T-cell (primary cell): ENCODE measurements at regions of chr3 and their contacts with region 1.

Region 1: GRCh38 chr3:143158014-143158988 is 38.7 kb downstream of the CHST2 start:
- DNase-seq: no peak
- ATAC-seq: no peak
- H3K4me3 ChIP-seq: no peak overlapping the region
- H3K4me3 Mint-ChIP-seq: no peak overlapping the region
- H3K27ac ChIP-seq: no peak overlapping the region
- H3K27ac Mint-ChIP-seq: no peak overlapping the region
- H3K4me1 ChIP-seq: peaks cover 0 to 4% of the 10 kb centered on the region in 2 experiments
- H3K4me1 Mint-ChIP-seq: peaks cover 13 to 31% (median 15%) of the 10 kb centered on the region in 3 donors
- H3K27me3 ChIP-seq: no peaks in the 10 kb centered on the region
- H3K27me3 Mint-ChIP-seq: no peaks in the 10 kb centered on the region

Region 2: DNA sequence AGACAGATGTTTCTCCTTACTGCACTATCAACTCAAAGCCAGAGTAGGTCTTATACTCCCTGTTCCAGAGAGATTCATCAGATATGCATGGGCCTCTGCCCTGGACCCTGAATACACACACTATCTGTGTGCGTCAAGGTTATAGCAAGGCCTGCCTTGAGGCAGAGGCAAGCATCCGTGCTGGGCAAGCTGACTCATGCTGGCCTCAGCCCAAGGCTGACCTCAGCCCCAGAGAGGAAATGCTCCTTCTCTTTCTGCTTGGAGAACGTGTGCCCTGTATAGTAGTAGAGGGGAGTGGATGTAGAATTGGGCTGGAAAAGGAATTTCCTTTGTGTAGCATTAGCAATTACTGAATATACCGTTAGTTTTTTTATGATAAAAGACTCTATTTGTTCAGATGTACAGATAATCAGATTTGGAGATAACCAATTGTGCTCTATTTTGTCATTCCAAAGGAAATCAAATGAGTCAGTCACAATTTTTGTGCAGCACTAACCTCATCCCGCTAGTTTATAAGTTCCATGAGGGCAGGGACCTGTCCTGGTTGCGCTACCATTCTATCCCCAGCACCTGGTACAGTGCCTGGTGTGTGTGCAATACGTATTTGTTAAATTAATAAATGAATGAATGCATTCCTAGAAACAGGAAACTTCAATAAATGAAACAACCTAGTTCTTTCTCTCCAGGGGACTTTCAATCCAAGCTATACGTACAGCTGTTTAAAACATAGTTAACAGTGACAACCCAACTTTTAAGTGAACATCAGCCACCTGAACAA is 181.5 kb before region 1 on chr3:
- CTCF ChIA-PET with region 1: no interaction called
- POLR2A ChIA-PET with region 1: no interaction called
- DNase-seq: no peak
- ATAC-seq: no peak
- H3K4me3 ChIP-seq: no peak overlapping the region
- H3K4me3 Mint-ChIP-seq: no peak overlapping the region
- H3K27ac ChIP-seq: no peak overlapping the region
- H3K27ac Mint-ChIP-seq: no peak overlapping the region
- H3K4me1 ChIP-seq: no peaks in the 10 kb centered on the region
- H3K4me1 Mint-ChIP-seq: no peaks in the 10 kb centered on the region
- H3K27me3 ChIP-seq: peaks cover 0 to 16% of the 10 kb centered on the region in 2 experiments
- H3K27me3 Mint-ChIP-seq: peaks cover 24 to 31% of the 10 kb centered on the region in 2 donors

Region 3: GRCh38 chr3:143135150-143135549 is 23.2 kb before region 1 on chr3:
- CTCF ChIA-PET with region 1: no interaction called
- POLR2A ChIA-PET with region 1: no interaction called
- DNase-seq: no peak
- ATAC-seq: no peak
- H3K4me3 ChIP-seq: no peak overlapping the region
- H3K4me3 Mint-ChIP-seq: no peak overlapping the region
- H3K27ac ChIP-seq: no peak overlapping the region
- H3K27ac Mint-ChIP-seq: no peak overlapping the region
- H3K4me1 ChIP-seq: peaks cover 0 to 5% of the 10 kb centered on the region in 2 experiments
- H3K4me1 Mint-ChIP-seq: peaks cover 3 to 12% (median 5%) of the 10 kb centered on the region in 3 donors
- H3K27me3 ChIP-seq: no peaks in the 10 kb centered on the region
- H3K27me3 Mint-ChIP-seq: no peaks in the 10 kb centered on the region

Region 4: GRCh38 chr3:143301031-143301901 is 143.0 kb after region 1 on chr3:
- CTCF ChIA-PET with region 1: no interaction called
- POLR2A ChIA-PET with region 1: interaction called in 1 of 2 experiments, 13 read pairs
- DNase-seq: no peak
- ATAC-seq: peak in 1 of 4 experiments; percentile 37
- H3K4me3 ChIP-seq: no peak overlapping the region
- H3K4me3 Mint-ChIP-seq: no peak overlapping the region
- H3K27ac ChIP-seq: no peak overlapping the region
- H3K27ac Mint-ChIP-seq: peak overlapping the region in 1 of 2 donors; percentile 17
- H3K4me1 ChIP-seq: peaks cover 2 to 3% of the 10 kb centered on the region in 2 experiments
- H3K4me1 Mint-ChIP-seq: peaks cover 12 to 26% (median 13%) of the 10 kb centered on the region in 3 donors
- H3K27me3 ChIP-seq: no peaks in the 10 kb centered on the region
- H3K27me3 Mint-ChIP-seq: no peaks in the 10 kb centered on the region